Activated T-helper 1 cell treated with anti-CD3 and anti-CD28 coated beads, Interleukin-12 subunit alpha, Interleukin-12 subunit beta, Interleukin-2, Interleukin-4 antibody, amounts not matched to agents 30 ng/mL and 10 ng/mL and 1 ng/mL, durations not matched to agents 14 hours and 24 hours and 36 hours (primary cell): ENCODE measurements at regions of chr14 and their contacts with region 1.

Region 1: DNA sequence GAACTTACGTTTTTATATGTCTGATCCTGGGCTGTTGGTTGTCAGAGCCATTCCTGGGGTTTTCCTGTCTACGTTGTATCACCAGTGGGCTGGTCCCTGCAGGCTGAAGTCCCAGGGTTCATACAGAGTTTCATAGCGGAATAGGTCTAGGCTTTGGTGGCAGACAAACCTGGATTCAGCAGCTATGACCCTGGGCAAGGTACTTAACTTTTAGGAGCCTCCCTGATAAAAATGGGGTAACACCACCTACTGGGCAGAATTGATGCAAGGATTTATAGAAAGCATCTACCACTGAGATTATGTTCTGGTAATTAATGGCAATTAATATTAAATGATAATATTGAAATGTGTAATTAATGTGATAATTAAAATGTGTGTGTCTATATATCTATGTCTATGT is 141.2 kb downstream of the SYNE2 start:
- DNase-seq: no peak
- H3K4me3 Mint-ChIP-seq: no peak overlapping the region
- H3K27ac Mint-ChIP-seq: peak overlapping the region; percentile 27
- H3K4me1 Mint-ChIP-seq: peaks cover 8% of the 10 kb centered on the region
- H3K27me3 Mint-ChIP-seq: no peaks in the 10 kb centered on the region

Region 2: DNA sequence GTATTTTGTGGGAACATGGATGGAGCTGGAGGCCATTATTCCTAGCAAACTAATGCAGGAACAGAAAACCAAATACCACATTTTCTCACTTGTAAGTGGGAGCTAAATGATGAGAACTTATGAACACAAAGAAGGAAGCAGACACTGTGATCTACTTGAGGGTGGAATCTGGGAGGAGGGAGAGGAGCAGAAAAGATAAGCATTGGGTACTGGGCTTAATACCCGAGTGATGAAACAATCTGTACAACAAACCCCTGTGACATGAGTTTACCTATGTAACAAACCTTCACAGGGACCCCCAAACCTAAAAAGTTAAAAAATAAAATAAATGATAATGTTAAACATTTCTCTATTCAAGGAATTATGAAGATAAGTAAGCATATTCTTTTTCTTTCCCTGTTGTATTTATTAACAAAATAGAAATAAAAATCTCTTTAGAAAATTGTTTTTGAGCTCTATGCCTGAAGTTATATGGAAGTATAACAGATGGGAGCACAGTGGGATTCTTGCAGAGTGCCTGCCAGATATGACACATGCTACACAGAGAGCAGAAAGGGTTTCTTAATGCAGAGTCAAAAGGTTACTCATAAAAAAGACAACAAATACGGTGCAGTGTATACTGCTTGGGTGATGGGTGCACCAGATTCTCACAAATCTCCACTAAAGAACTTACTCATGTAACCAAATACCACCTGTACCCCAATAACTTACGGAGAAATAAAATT is 193.2 kb before region 1 on chr14:
- intact Hi-C with region 1: loop called (anchors 1 kb)
- DNase-seq: no peak
- H3K4me3 Mint-ChIP-seq: no peak overlapping the region
- H3K27ac Mint-ChIP-seq: no peak overlapping the region
- H3K4me1 Mint-ChIP-seq: peaks cover 5% of the 10 kb centered on the region
- H3K27me3 Mint-ChIP-seq: peaks cover 18% of the 10 kb centered on the region

Region 3: DNA sequence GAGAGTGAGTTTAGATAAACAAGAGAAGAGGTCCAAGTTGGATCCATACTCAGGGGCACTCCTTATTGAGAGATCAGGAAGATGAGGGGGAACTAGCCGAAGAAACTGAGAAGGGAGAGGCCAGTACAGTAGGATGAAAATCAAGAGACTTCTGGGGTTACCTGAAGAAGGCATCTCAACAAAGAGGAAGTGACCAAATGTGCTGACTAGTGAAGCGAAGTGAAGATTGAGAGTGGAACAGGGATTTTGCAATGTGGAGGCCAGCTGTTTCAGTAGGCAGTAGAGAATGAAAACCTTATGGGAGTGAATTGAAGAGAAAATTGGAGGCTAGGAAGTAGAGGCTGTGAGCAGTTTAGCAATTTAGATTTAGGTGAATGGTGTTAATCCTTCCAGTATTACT is 11.8 kb after region 1 on chr14:
- intact Hi-C with region 1: no loop called
- DNase-seq: no peak
- H3K4me3 Mint-ChIP-seq: no peak overlapping the region
- H3K27ac Mint-ChIP-seq: no peak overlapping the region
- H3K4me1 Mint-ChIP-seq: no peaks in the 10 kb centered on the region
- H3K27me3 Mint-ChIP-seq: no peaks in the 10 kb centered on the region

Region 4: GRCh38 chr14:64026600-64026999 is 32.6 kb after region 1 on chr14:
- intact Hi-C with region 1: no loop called
- DNase-seq: no peak
- H3K4me3 Mint-ChIP-seq: no peak overlapping the region
- H3K27ac Mint-ChIP-seq: no peak overlapping the region
- H3K4me1 Mint-ChIP-seq: no peaks in the 10 kb centered on the region
- H3K27me3 Mint-ChIP-seq: no peaks in the 10 kb centered on the region

Region 5: GRCh38 chr14:64053694-64054528 is 59.9 kb after region 1 on chr14:
- intact Hi-C with region 1: no loop called
- DNase-seq: no peak
- H3K4me3 Mint-ChIP-seq: no peak overlapping the region
- H3K27ac Mint-ChIP-seq: no peak overlapping the region
- H3K4me1 Mint-ChIP-seq: no peaks in the 10 kb centered on the region
- H3K27me3 Mint-ChIP-seq: no peaks in the 10 kb centered on the region